H1 (cell line): ENCODE measurements at regions of chr1 and their contacts with region 1.

Region 1: DNA sequence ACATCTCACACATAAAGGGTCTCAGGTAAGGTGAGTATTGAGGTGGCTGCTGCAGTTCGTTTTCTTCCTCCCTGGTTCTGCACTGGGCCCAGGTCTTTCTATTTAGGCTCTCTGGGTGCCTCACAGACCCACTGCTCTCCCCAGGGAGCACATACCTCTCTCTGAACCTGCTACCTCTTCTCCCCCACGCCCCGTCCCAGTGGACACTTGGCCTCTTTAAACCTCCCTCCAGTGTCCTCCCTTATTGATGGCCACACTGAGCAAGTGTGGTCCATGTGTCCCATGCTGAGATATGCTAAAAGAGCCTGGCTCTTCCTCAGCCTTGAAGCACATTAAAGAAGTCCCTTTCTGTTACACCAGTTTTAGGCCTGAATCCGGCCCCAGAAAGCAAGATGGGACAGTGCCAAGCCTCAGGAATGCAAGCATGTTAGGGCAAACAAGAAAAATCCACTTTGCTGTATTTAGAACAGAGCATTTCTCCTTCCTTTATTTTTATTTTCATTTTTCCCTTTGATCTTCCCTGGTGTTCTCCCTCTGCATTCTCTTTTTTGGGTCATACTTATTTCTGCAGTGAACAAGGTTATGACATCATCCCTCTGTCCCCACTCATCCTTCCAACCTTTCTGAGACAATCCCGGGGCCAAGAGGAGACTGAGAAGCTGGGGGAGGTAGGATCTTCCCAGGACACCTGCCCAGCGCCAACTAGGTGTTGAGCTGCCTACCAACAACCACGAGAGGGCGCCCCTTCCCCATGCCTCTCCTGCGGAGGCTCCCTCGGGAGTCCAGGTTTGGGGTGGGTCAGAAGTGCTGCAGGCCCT is 5.0 kb upstream of the CHI3L2 start:
- DNase-seq: peak; percentile 46 to 94
- H3K4me3 ChIP-seq: no peak overlapping the region
- H3K27ac ChIP-seq: no peak overlapping the region
- H3K4me1 ChIP-seq: peaks cover 0 to 8% (median under 1%) of the 10 kb centered on the region in 4 experiments; a peak in 2 of 7 replicates
- H3K27me3 ChIP-seq: no peaks in the 10 kb centered on the region
- CTCF ChIP-seq: peak; percentile 95 to 98 (median 96)
- EP300 ChIP-seq: no peak
- POLR2A ChIP-seq: no peak
- RAD21 ChIP-seq: peak; percentile 99 to 100

Region 2: GRCh38 chr1:111139956-111140679 is 82.4 kb before region 1 on chr1 and contains the starts of genes CEPT1 and DRAM2:
- CTCF ChIA-PET with region 1: no interaction called
- POLR2A ChIA-PET with region 1: no interaction called
- DNase-seq: peak; percentile 88 to 96
- H3K4me3 ChIP-seq: peak within 1 kb of the TSS; percentile 52 to 84 (median 82)
- H3K27ac ChIP-seq: peak within 1 kb of the TSS; percentile 86; the same call in 1 of the 2 replicates
- H3K4me1 ChIP-seq: peaks cover 0 to 8% (median 0%) of the 10 kb centered on the region in 4 experiments; a peak in 3 of 7 replicates
- H3K27me3 ChIP-seq: no peaks in the 10 kb centered on the region
- CTCF ChIP-seq: no peak
- EP300 ChIP-seq: no peak
- POLR2A ChIP-seq: peak; percentile 77 to 78
- RAD21 ChIP-seq: no peak
- total RNA-seq, gene CEPT1: 28.6 and 29.6 TPM in 2 replicates
- total RNA-seq, gene DRAM2: 30.0 and 35.2 TPM in 2 replicates

Region 3: GRCh38 chr1:111197598-111198284 is 24.8 kb before region 1 on chr1:
- CTCF ChIA-PET with region 1: interaction called, 26 read pairs
- POLR2A ChIA-PET with region 1: no interaction called
- DNase-seq: peak; percentile 54 to 68
- H3K4me3 ChIP-seq: no peak overlapping the region
- H3K27ac ChIP-seq: no peak overlapping the region
- H3K4me1 ChIP-seq: no peaks in the 10 kb centered on the region
- H3K27me3 ChIP-seq: no peaks in the 10 kb centered on the region; a peak in 1 of 7 replicates
- CTCF ChIP-seq: peak; percentile 86 to 87 (median 87)
- EP300 ChIP-seq: no peak
- POLR2A ChIP-seq: no peak
- RAD21 ChIP-seq: peak; percentile 69 to 73

Region 4: DNA sequence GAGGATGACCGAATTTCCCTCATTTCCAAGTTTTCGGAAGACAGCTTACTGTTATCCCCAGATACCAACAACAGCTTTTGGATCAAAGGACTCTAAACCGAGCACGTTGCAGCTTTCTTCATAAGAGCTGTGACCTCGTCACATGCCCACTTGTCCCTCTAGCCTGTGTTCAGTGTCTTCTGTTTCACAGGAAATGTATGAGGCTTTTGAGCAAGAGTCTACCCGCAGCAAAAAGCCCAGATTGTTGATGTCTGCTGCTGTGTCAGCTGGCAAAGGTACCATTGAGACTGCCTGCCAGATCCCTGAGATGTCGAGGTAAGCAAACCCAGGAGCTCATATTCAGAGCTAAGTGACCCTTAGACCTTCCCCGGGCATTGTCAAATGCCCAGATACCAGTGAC is 29.1 kb after region 1 on chr1:
- CTCF ChIA-PET with region 1: interaction called, 11 read pairs
- POLR2A ChIA-PET with region 1: interaction called, 3 read pairs
- DNase-seq: no peak
- H3K4me3 ChIP-seq: no peak overlapping the region
- H3K27ac ChIP-seq: no peak overlapping the region
- H3K4me1 ChIP-seq: no peaks in the 10 kb centered on the region
- H3K27me3 ChIP-seq: no peaks in the 10 kb centered on the region
- CTCF ChIP-seq: no peak
- EP300 ChIP-seq: no peak
- POLR2A ChIP-seq: no peak
- RAD21 ChIP-seq: no peak

Region 5: GRCh38 chr1:111334169-111334568 is 111.7 kb after region 1 on chr1:
- CTCF ChIA-PET with region 1: interaction called, 58 read pairs
- POLR2A ChIA-PET with region 1: interaction called, 4 read pairs
- DNase-seq: no peak
- H3K4me3 ChIP-seq: no peak overlapping the region
- H3K27ac ChIP-seq: no peak overlapping the region
- H3K4me1 ChIP-seq: no peaks in the 10 kb centered on the region
- H3K27me3 ChIP-seq: no peaks in the 10 kb centered on the region
- CTCF ChIP-seq: peak; percentile 37 to 84 (median 72)
- EP300 ChIP-seq: no peak
- POLR2A ChIP-seq: no peak
- RAD21 ChIP-seq: peak; percentile 96

Region 6: DNA sequence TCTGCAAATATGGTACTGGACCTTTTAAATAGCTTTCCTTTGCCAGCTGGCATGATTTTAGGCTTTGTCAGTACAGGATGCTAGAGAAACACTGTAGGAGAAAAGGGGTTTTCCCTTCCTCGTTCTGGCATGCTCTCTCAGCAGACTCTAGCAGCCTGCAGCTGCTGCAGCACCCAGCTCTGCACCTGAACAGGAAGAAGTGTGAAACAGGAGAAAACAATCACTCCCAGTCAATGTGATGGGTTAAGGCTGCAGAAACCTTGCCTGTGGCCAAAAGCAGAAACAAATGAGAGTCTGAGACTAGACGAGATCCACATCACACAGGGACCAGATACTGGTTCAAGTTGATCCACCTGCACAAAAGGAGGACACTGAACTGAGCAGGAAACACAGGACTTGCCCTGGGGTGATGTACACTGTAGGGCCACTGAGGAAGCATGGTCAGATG is 183.8 kb after region 1 on chr1:
- CTCF ChIA-PET with region 1: interaction called, 44 read pairs
- POLR2A ChIA-PET with region 1: no interaction called
- DNase-seq: no peak
- H3K4me3 ChIP-seq: no peak overlapping the region
- H3K27ac ChIP-seq: no peak overlapping the region
- H3K4me1 ChIP-seq: no peaks in the 10 kb centered on the region
- H3K27me3 ChIP-seq: no peaks in the 10 kb centered on the region
- CTCF ChIP-seq: no peak
- EP300 ChIP-seq: no peak
- POLR2A ChIP-seq: no peak
- RAD21 ChIP-seq: no peak

Region 7: DNA sequence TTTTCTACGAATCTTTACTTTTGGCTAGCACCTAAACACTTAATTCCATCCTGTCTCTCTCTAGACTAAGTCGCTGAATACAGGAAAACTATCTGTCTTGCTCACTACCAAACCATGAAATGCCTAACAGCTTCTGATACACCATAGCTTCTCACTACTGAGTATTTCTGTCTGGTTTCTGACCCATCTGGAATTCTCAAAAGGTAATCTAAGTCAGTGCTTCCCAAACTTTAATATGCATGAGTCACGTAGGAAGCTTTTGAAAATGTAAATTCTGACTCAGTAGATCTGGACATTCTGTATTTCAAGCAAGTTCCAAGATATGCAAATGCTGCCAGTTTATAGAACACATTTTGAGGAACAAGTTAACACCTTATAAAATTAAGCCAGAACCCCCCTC is 214.2 kb after region 1 on chr1:
- CTCF ChIA-PET with region 1: interaction called, 10 read pairs
- POLR2A ChIA-PET with region 1: no interaction called
- DNase-seq: no peak
- H3K4me3 ChIP-seq: no peak overlapping the region
- H3K27ac ChIP-seq: no peak overlapping the region
- H3K4me1 ChIP-seq: no peaks in the 10 kb centered on the region
- H3K27me3 ChIP-seq: no peaks in the 10 kb centered on the region
- CTCF ChIP-seq: no peak
- EP300 ChIP-seq: no peak
- POLR2A ChIP-seq: no peak
- RAD21 ChIP-seq: no peak